Tibial artery (tissue), 4 donors: ENCODE measurements at regions of chr15 and their contacts with region 1.

Region 1: DNA sequence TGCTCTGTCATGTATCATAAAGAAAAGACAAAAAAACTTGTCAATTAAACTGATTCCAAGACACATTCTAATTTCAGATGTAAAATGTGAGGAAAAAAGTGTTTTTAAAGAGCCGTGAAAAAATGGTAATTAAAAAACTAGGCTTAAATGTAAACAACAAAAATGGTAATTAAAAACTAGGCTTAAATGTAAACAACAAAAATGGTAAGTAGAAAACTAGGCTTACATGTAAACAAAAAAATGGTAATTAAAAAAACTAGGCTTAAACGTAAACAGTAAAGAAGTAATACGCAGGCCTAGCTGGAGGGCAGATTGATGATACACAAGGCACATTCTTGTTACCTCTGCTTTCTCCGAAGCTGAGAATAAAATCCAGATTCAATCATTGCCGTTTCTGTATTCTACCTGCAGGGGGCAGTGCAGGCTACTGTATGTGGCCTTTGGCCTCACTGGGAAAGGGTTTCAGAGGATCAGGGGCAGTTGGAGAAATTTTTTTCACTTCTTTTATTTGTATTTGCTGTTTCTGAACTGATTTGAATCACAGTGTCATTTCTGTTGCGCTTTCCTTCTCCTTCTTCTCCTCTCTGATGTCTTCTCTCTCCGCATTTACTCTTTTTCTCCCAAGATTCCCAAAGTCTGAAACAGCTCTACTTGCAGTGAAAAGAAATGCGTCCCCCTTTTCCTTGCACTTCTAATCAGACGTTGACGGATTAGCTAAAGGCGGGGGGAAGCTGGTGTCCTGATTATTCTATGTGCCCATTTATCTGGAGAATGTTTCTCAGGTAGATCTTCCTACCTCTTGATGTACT is 67.2 kb upstream of the MCTP2 start:
- DNase-seq: no peak
- H3K4me3 ChIP-seq: no peak overlapping the region
- H3K27ac ChIP-seq: no peak overlapping the region
- H3K4me1 ChIP-seq: no peaks in the 10 kb centered on the region
- H3K27me3 ChIP-seq: no peaks in the 10 kb centered on the region
- CTCF ChIP-seq: peak; percentile 58 to 63

Region 2: DNA sequence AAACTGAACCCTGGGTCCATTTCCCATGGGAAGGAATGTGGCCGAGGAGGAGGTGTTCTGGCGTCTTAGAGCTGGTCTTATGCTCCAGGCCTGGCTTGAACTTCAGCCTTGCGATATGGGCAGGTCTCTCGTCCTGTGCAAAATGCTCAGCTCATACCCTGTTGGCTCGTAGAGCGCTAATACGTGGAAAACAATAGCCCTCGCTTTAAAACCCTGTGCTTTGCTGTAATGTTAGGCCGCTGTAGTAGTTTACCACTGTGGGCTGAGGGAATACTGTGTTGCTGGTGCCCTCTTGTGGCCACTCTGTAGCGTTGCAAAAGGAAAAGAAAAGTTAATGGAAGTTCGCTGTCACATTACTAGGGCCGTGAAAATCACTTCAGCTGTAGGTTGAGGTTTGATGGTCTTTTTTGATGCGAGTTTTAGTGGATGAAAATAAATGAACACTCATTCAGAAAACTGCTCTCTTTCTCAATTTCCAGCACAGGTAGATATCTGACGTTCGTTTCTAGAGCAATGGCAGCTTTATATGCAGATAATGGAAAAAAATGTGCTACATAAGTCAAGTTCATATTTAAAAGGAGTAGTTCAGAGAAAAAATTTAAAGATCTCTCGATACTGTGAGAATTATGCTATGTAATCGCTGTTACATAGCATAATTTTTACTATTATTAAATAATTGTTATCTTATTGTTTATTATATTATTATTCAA is 160.1 kb after region 1 on chr15:
- intact Hi-C with region 1: loop called (anchors 5 kb)
- DNase-seq: no peak
- H3K4me3 ChIP-seq: no peak overlapping the region
- H3K27ac ChIP-seq: no peak overlapping the region
- H3K4me1 ChIP-seq: no peaks in the 10 kb centered on the region
- H3K27me3 ChIP-seq: no peaks in the 10 kb centered on the region
- CTCF ChIP-seq: peak; percentile 82 to 89

Region 3: DNA sequence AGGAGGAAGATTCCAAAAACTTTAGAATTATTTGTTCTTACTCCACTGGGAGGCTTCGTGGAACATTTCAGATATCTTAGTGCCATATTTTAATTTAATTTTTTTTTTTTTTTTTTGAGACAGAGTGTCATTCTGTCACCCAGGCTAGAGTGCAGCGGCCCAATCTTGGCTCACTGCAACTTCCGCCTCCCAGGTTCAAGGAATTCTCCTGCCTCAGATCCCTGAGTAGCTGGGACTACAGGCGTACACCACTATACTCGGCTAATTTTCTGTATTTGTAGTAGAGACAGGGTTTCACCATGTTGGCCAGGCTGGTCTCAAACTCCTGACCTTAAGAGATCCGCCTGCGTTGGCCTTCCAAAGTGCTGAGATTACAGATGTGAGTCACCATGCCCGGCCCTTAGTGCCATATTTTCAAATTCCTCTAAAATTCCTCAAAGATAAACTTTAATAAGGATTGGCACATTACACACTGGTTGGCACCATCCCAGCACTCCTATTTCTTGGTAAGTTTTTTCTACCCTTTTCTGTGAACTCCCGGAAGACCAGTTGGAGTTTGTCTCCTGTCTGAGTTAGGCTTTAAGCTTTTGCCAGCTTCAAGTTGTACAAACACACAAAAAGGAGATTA is 760.9 kb after region 1 on chr15:
- intact Hi-C with region 1: no loop called
- DNase-seq: peak; percentile 41 to 77
- H3K4me3 ChIP-seq: no peak overlapping the region
- H3K27ac ChIP-seq: peak overlapping the region; percentile 8 to 59
- H3K4me1 ChIP-seq: peaks cover 0 to 55% (median 9%) of the 10 kb centered on the region in 4 donors
- H3K27me3 ChIP-seq: no peaks in the 10 kb centered on the region
- CTCF ChIP-seq: no peak